Activated T-helper 2 cell treated with anti-CD3 and anti-CD28 coated beads, Interferon-gamma antibody, Interleukin-2, Interleukin-4, amounts not matched to agents 10 μg/mL and 5 μg/mL and 100 μg/mL, durations not matched to agents 14 hours and 24 hours and 36 hours (primary cell): ENCODE measurements at regions of chr1 and their contacts with region 1.

Region 1: DNA sequence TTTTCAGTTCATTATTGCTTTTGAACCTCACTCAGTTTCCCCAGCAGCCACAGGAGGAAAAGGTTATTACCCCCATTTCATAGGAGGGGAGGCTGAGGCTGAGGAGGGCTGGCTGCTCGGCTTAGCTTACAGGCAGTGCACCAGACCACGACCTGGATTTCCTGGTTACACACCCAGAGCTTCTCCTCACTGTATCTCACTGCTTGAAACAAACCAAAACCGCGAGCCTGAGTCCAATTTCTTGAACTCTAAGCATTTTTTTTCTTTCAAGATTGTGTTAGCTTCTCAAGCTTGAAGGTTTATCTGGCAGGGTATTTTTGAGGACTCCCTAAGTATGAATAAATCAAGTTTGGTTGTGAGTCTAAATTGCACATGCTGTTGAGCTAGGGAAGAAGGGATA is 188.9 kb upstream of the EDN2 start:
- DNase-seq: peak; percentile 59
- H3K4me3 Mint-ChIP-seq: peak overlapping the region; percentile 51
- H3K27ac Mint-ChIP-seq: peak overlapping the region; percentile 92
- H3K4me1 Mint-ChIP-seq: peaks cover 92% of the 10 kb centered on the region
- H3K27me3 Mint-ChIP-seq: no peaks in the 10 kb centered on the region

Region 2: GRCh38 chr1:41599912-41600311 is 73.5 kb before region 1 on chr1:
- intact Hi-C with region 1: no loop called
- DNase-seq: no peak
- H3K4me3 Mint-ChIP-seq: no peak overlapping the region
- H3K27ac Mint-ChIP-seq: peak overlapping the region; percentile 74
- H3K4me1 Mint-ChIP-seq: peaks cover 42% of the 10 kb centered on the region
- H3K27me3 Mint-ChIP-seq: no peaks in the 10 kb centered on the region

Region 3: DNA sequence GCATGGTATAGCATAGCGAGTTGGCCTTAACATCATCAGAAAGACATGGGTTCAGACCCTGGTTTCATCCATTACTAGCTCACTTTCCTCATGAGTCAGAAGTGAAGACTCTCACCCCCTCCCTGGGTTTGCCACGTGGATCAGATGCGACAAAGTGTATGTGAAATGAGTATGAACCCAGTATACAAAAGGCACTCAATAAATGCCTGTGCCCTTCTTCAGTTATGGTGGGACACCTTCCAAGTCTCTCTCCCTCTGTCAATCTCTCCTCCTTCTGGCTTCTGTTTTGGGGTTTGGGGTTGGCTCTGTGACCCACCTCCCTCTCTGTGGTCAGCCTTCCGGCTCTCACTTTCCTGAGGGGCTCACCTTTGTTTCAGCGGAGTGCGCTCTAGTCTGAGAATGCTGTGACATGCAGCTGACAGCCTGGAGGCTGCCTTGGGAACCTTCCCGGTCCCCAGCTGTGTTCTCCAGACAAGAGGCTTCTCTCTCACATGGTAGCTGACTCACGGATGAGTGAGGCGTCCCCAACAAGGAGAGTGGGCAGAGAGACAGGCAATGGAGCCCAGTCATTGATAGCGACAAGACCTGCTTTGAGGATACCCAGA is 33.9 kb before region 1 on chr1:
- intact Hi-C with region 1: loop called (anchors 1 kb)
- DNase-seq: no peak
- H3K4me3 Mint-ChIP-seq: peak overlapping the region; percentile 60
- H3K27ac Mint-ChIP-seq: no peak overlapping the region
- H3K4me1 Mint-ChIP-seq: peaks cover 46% of the 10 kb centered on the region
- H3K27me3 Mint-ChIP-seq: no peaks in the 10 kb centered on the region

Region 4: GRCh38 chr1:41683681-41684500 is 10.5 kb after region 1 on chr1:
- intact Hi-C with region 1: loop called (anchors 1 kb)
- DNase-seq: peak; percentile 47
- H3K4me3 Mint-ChIP-seq: peak overlapping the region; percentile 23
- H3K27ac Mint-ChIP-seq: peak overlapping the region; percentile 51
- H3K4me1 Mint-ChIP-seq: peaks cover 86% of the 10 kb centered on the region
- H3K27me3 Mint-ChIP-seq: no peaks in the 10 kb centered on the region

Region 5: GRCh38 chr1:41728403-41729202 is 55.2 kb after region 1 on chr1:
- intact Hi-C with region 1: loop called (anchors 2 kb)
- DNase-seq: peak; percentile 20
- H3K4me3 Mint-ChIP-seq: no peak overlapping the region
- H3K27ac Mint-ChIP-seq: peak overlapping the region; percentile 67
- H3K4me1 Mint-ChIP-seq: peaks cover 43% of the 10 kb centered on the region
- H3K27me3 Mint-ChIP-seq: no peaks in the 10 kb centered on the region